ENCODE measurements at regions of chr19 and their contacts with region 1.

Region 1: DNA sequence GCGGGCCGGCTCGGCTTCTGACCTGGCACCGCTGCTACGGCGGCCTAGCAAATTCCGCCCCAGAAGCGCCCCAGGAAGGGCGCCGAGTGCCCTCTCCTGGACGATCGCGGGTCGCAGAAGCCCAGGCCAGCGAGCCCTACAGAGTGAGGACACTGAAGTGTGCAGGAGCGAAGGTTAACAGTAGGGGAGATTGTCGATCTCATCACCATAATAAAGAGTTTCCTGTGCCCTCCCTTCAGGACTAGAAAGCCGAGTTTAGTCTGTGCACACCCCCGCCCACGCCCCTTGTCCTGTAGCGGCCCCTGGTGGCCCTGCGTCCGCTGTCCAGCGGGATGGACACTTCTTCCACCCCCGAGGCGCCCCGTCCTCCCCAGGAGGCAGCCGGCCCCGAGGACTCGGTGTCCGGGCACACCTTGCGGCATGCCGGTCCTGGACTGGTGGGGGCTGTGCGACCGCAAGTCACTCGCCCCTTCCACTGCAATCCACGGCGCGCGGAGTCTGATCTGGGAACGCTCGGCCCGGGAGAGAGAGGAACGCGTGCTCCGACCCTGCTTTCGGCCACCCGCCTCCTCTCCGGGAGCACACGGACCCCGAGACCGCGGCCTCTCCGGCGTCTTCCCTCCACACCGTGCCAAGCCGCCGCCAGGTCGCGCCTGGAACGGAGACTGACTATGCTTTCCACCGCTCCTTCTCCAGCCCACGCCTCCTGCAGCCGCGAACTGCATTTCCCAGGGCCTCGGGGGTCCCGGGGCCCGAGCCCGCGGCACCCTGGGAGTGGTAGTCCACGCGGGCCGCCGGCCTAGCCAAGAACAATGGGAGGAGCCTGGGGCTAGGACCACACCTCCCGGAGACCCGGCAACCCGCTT is 769 bp upstream of the KMT2B start:
- DNase-seq: peak; percentile 97
- ATAC-seq: peak; percentile 79
- H3K4me3 ChIP-seq: peak overlapping the region; percentile 39 to 87 (median 76)
- H3K4me3 Mint-ChIP-seq: peak overlapping the region; percentile 98
- H3K27ac ChIP-seq: peak overlapping the region; percentile 68 to 85
- H3K27ac Mint-ChIP-seq: peak overlapping the region; percentile 99
- H3K4me1 ChIP-seq: peaks cover 27 to 66% of the 10 kb centered on the region in 2 donors
- H3K4me1 Mint-ChIP-seq: peaks cover 66% of the 10 kb centered on the region
- H3K27me3 ChIP-seq: no peaks in the 10 kb centered on the region
- H3K27me3 Mint-ChIP-seq: no peaks in the 10 kb centered on the region
- CTCF ChIP-seq: peak; percentile 90

Region 2: GRCh38 chr19:35545001-35545911 is 171.8 kb before region 1 on chr19 and contains the start of gene TMEM147:
- CTCF ChIA-PET with region 1: no interaction called
- POLR2A ChIA-PET with region 1: no interaction called
- intact Hi-C with region 1: loop called (anchors 1 kb)
- DNase-seq: peak; percentile 87
- ATAC-seq: peak; percentile 92
- H3K4me3 ChIP-seq: peak within 1 kb of the TSS; percentile 45 to 97 (median 86)
- H3K4me3 Mint-ChIP-seq: peak within 1 kb of the TSS; percentile 91
- H3K27ac ChIP-seq: peak within 1 kb of the TSS; percentile 87 to 92
- H3K27ac Mint-ChIP-seq: peak within 1 kb of the TSS; percentile 89
- H3K4me1 ChIP-seq: peaks cover 16 to 34% of the 10 kb centered on the region in 2 donors
- H3K4me1 Mint-ChIP-seq: peaks cover 37% of the 10 kb centered on the region
- H3K27me3 ChIP-seq: no peaks in the 10 kb centered on the region
- H3K27me3 Mint-ChIP-seq: no peaks in the 10 kb centered on the region
- CTCF ChIP-seq: no peak
- total RNA-seq, gene TMEM147: 39.8 and 41.6 TPM in 2 replicates

Region 3: GRCh38 chr19:35648017-35648961 is 68.7 kb before region 1 on chr19 and contains the start of gene COX6B1:
- CTCF ChIA-PET with region 1: no interaction called
- POLR2A ChIA-PET with region 1: no interaction called
- intact Hi-C with region 1: loop called (anchors 1 kb)
- DNase-seq: peak; percentile 96
- ATAC-seq: peak; percentile 65
- H3K4me3 ChIP-seq: peak within 1 kb of the TSS; percentile 69 to 88 (median 85)
- H3K4me3 Mint-ChIP-seq: peak within 1 kb of the TSS; percentile 94
- H3K27ac ChIP-seq: peak within 1 kb of the TSS; percentile 64 to 80
- H3K27ac Mint-ChIP-seq: peak within 1 kb of the TSS; percentile 87
- H3K4me1 ChIP-seq: peaks cover 14 to 43% of the 10 kb centered on the region in 2 donors
- H3K4me1 Mint-ChIP-seq: peaks cover 44% of the 10 kb centered on the region
- H3K27me3 ChIP-seq: no peaks in the 10 kb centered on the region
- H3K27me3 Mint-ChIP-seq: no peaks in the 10 kb centered on the region
- CTCF ChIP-seq: no peak
- total RNA-seq, gene COX6B1: 214 and 215 TPM in 2 replicates

Region 4: DNA sequence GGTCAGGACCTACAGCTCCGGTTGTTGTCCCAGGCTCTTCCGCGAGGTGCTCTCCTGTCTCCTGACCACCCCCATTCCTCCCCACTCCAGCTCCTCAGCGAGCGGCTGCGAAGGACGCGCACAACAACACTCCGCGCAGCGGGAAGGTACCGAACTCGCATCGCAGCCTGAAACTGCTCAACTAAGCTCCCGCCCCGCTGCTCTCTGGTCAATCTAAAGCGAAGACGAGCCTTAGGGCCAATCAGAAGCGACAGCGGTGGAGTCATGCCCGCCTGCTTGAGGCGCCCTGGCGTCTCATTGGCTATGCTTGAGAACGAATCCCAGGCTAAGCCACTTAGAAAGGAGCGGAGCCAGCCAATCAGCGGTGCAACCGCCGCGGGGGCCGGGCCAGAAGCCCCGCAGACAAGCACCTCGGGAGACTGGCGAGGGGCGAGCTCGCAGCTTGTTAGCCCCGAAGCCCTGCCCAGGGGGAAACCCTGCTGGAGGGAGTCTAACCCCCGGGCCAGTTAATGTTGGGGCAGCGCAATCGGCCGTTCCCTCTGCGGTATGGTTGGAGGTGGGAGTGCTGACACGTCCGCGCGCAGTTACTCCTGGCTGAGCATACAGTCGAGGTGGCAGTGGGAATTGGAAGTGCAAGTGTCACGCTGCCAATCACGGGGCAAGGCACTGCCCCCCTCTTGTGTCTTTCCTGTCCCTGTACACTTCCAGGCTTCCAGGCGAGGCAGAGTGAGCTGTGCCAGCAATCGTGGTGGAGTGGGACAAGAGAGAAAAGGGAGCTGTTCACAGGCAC is 14.6 kb before region 1 on chr19:
- CTCF ChIA-PET with region 1: interaction called, 123 read pairs
- POLR2A ChIA-PET with region 1: interaction called, 53 read pairs
- intact Hi-C with region 1: loop called (anchors 1 kb)
- DNase-seq: peak; percentile 96
- ATAC-seq: peak; percentile 99
- H3K4me3 ChIP-seq: peak overlapping the region in 4 of 5 experiments; percentile 61 to 86 (median 74)
- H3K4me3 Mint-ChIP-seq: peak overlapping the region; percentile 98
- H3K27ac ChIP-seq: peak overlapping the region; percentile 59 to 74
- H3K27ac Mint-ChIP-seq: peak overlapping the region; percentile 98
- H3K4me1 ChIP-seq: peaks cover 0 to 19% of the 10 kb centered on the region in 2 donors
- H3K4me1 Mint-ChIP-seq: peaks cover 8% of the 10 kb centered on the region
- H3K27me3 ChIP-seq: no peaks in the 10 kb centered on the region
- H3K27me3 Mint-ChIP-seq: no peaks in the 10 kb centered on the region
- CTCF ChIP-seq: no peak

Region 5: DNA sequence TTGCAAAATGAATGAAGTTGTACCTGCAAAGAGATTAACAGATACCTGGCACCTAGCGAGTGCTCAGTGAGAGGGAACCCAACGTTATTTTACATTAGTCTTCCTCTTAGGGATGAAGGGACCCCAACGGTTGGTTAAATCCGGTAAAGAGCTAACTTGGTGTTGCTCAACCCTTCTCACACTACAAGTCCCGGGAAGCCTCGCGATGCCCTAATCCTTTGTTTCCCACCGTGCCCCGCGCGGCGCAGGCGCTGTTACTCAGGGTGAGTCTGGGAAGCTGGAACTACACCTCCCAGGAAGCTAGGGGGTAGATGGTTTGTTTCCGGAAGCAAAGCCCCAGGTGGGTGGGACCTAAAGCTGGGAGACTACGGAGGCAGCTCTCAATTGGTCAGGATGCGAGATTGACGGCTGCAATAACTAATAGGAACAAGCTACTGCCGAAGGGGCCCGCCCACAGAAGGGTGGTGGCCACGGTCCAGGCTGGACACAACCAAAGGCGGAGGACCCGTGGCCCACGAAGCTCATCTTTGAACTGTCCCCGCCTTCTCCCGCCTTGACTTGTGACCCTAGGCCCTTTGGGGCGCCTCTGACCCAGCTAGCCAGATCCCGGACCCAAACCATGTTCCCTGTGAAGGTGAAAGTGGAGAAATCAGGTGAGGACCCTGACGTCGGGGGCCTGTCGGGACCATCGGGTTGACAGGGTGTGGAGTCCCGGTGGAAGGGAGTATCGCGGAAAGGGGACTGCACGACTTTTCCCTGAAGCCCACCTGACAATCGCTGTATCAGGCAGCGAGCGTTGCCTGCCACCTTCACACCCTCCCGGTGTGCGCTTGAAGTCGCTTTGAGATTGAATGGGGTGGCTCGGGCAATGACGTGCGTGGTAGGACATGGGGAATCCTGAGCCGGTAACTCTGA is 31.3 kb after region 1 on chr19 and contains the start of gene LIN37:
- CTCF ChIA-PET with region 1: interaction called, 4 read pairs
- POLR2A ChIA-PET with region 1: interaction called, 7 read pairs
- intact Hi-C with region 1: loop called (anchors 1 kb)
- DNase-seq: peak; percentile 99
- ATAC-seq: peak; percentile 71
- H3K4me3 ChIP-seq: peak within 1 kb of the TSS; percentile 65 to 99 (median 74)
- H3K4me3 Mint-ChIP-seq: peak within 1 kb of the TSS; percentile 99
- H3K27ac ChIP-seq: peak within 1 kb of the TSS; percentile 63 to 92
- H3K27ac Mint-ChIP-seq: peak within 1 kb of the TSS; percentile 97
- H3K4me1 ChIP-seq: peaks cover 30 to 38% of the 10 kb centered on the region in 2 donors
- H3K4me1 Mint-ChIP-seq: peaks cover 49% of the 10 kb centered on the region
- H3K27me3 ChIP-seq: no peaks in the 10 kb centered on the region
- H3K27me3 Mint-ChIP-seq: no peaks in the 10 kb centered on the region
- CTCF ChIP-seq: no peak
- total RNA-seq, gene LIN37: 22.3 and 22.8 TPM in 2 replicates

Region 6: GRCh38 chr19:35775298-35776110 is 58.5 kb after region 1 on chr19 and contains the start of gene ARHGAP33:
- CTCF ChIA-PET with region 1: no interaction called
- POLR2A ChIA-PET with region 1: no interaction called
- intact Hi-C with region 1: loop called (anchors 1 kb)
- DNase-seq: peak; percentile 99
- ATAC-seq: peak; percentile 99
- H3K4me3 ChIP-seq: peak within 1 kb of the TSS; percentile 26 to 68 (median 58)
- H3K4me3 Mint-ChIP-seq: peak within 1 kb of the TSS; percentile 86
- H3K27ac ChIP-seq: peak within 1 kb of the TSS in 1 of 2 donors; percentile 19
- H3K27ac Mint-ChIP-seq: peak within 1 kb of the TSS; percentile 43
- H3K4me1 ChIP-seq: peaks cover 10 to 16% of the 10 kb centered on the region in 2 donors
- H3K4me1 Mint-ChIP-seq: peaks cover 10% of the 10 kb centered on the region
- H3K27me3 ChIP-seq: no peaks in the 10 kb centered on the region
- H3K27me3 Mint-ChIP-seq: no peaks in the 10 kb centered on the region
- CTCF ChIP-seq: no peak
- total RNA-seq, gene ARHGAP33: 18.2 and 21.6 TPM in 2 replicates

Region 7: DNA sequence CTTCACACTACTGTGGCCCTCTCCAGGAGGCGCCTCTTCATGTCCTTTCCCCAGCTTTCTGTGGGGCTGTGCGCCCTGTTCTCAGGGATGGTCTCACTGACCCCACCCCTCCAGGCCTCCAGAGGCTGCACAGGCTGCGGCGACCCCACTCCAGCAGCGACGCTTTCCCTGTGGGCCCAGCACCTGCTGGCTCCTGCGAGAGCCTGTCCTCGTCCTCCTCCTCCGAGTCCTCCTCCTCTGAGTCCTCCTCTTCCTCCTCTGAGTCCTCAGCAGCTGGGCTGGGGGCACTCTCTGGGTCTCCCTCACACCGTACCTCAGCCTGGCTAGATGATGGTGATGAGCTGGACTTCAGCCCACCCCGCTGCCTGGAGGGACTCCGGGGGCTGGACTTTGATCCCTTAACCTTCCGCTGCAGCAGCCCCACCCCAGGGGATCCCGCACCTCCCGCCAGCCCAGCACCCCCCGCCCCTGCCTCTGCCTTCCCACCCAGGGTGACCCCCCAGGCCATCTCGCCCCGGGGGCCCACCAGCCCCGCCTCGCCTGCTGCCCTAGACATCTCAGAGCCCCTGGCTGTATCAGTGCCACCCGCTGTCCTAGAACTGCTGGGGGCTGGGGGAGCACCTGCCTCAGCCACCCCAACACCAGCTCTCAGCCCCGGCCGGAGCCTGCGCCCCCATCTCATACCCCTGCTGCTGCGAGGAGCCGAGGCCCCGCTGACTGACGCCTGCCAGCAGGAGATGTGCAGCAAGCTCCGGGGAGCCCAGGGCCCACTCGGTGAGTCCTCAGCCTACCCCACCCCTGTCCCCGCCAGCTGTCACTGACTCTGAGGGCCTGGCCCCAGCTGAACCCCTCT is 69.5 kb after region 1 on chr19:
- CTCF ChIA-PET with region 1: no interaction called
- POLR2A ChIA-PET with region 1: no interaction called
- intact Hi-C with region 1: no loop called
- DNase-seq: no peak
- ATAC-seq: no peak
- H3K4me3 ChIP-seq: no peak overlapping the region
- H3K4me3 Mint-ChIP-seq: no peak overlapping the region
- H3K27ac ChIP-seq: no peak overlapping the region
- H3K27ac Mint-ChIP-seq: no peak overlapping the region
- H3K4me1 ChIP-seq: no peaks in the 10 kb centered on the region
- H3K4me1 Mint-ChIP-seq: no peaks in the 10 kb centered on the region
- H3K27me3 ChIP-seq: no peaks in the 10 kb centered on the region
- H3K27me3 Mint-ChIP-seq: no peaks in the 10 kb centered on the region
- CTCF ChIP-seq: no peak

Measured in B cell (primary cell).